ENCODE measurements at regions of chr7 and their contacts with region 1.

Region 1: GRCh38 chr7:29408841-29409243 is 154.8 kb upstream of the PRR15 start:
- DNase-seq: peak; percentile 73 to 78
- H3K4me3 ChIP-seq: no peak overlapping the region
- H3K4me1 ChIP-seq: peaks cover 8% of the 10 kb centered on the region; the same call in 1 of the 2 replicates
- H3K27me3 ChIP-seq: no peaks in the 10 kb centered on the region

Region 2: DNA sequence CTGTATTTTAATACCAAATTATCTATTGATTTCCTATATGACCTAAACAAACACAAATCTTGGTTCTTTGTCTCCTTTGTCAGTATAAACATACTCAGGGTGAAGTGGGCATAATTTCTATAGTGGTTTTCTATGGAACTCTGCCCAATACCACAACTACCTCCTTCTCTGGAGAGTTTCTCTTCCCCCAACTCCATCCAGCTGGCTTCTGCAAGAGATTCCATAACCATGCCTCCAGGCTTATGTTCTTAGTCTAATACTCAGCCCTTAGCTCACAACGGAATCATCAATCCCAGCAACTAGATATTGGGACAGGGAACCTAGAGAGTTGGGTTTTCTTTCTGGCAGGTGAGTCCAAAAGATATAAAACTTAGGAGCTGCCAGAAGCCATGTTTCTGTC is 578.0 kb before region 1 on chr7:
- in situ Hi-C with region 1: no loop called
- DNase-seq: no peak
- H3K4me3 ChIP-seq: no peak overlapping the region
- H3K4me1 ChIP-seq: no peaks in the 10 kb centered on the region
- H3K27me3 ChIP-seq: peaks cover 13% of the 10 kb centered on the region

Region 3: GRCh38 chr7:28926871-28927597 is 481.8 kb before region 1 on chr7:
- in situ Hi-C with region 1: loop called (anchors 5 kb)
- DNase-seq: peak; percentile 75 to 93
- H3K4me3 ChIP-seq: peak overlapping the region; percentile 31
- H3K4me1 ChIP-seq: peaks cover 6% of the 10 kb centered on the region
- H3K27me3 ChIP-seq: no peaks in the 10 kb centered on the region

Region 4: GRCh38 chr7:29105752-29106668 is 302.8 kb before region 1 on chr7:
- in situ Hi-C with region 1: loop called (anchors 5 kb)
- DNase-seq: peak; percentile 60 to 63
- H3K4me3 ChIP-seq: no peak overlapping the region
- H3K4me1 ChIP-seq: no peaks in the 10 kb centered on the region; the same call in 1 of the 2 replicates
- H3K27me3 ChIP-seq: no peaks in the 10 kb centered on the region

Region 5: GRCh38 chr7:29189743-29190201 is 219.1 kb before region 1 on chr7:
- in situ Hi-C with region 1: loop called (anchors 10 kb)
- DNase-seq: peak; percentile 27 to 77
- H3K4me3 ChIP-seq: no peak overlapping the region
- H3K4me1 ChIP-seq: no peaks in the 10 kb centered on the region
- H3K27me3 ChIP-seq: no peaks in the 10 kb centered on the region